Activated CD4-positive, alpha-beta T cell treated with anti-CD3 and anti-CD28 coated beads for 36 hours (primary cell): ENCODE measurements at regions of chr2 and their contacts with region 1.

Region 1: DNA sequence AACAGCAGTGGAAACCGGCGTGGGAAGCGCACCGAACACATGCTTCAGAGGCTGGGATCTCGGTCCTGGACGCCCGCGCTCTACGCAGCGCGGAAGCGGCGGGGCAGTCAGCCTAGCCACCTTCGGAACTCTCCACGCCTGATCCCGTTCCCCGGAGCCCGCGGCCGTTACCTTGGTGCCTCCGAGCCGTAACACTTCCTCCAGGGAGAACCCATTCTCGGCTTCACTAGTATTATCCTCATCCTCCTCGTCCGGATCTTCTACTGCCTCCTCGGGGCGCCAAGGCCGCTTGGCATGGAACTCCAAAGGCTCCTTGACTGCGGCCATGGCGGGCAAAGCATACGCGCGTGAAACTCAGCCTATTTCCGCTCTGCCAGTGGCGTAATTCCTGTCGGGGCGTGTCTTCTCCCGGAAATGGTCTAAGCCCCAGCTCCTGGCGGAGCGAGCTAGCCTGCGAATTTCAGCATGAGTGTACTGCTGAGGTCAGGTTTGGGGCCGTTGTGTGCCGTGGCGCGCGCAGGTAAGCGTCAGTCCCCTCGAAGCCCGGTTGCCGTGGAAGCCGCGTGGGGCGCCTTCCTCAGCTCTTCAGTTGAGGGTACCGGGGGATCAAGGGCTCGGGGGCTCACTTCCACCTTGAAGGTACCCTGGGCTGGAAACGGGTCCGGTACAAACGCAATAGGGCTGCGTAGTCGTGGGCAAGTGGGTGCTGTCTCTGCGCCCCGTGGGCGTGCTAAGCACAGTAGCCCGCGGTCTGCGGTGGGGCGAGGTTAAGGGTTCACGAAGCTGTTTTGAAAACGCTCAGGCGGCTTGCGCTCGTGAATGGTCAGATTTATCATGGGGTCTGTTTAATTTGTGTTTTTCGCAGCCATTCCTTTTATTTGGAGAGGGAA is at the starts of genes CEBPZ and NDUFAF7:
- DNase-seq: peak; percentile 95
- ATAC-seq: peak; percentile 96
- H3K4me3 Mint-ChIP-seq: no peak within 1 kb of the TSS
- H3K27ac Mint-ChIP-seq: no peak within 1 kb of the TSS
- H3K4me1 Mint-ChIP-seq: peaks cover 39% of the 10 kb centered on the region
- H3K27me3 Mint-ChIP-seq: no peaks in the 10 kb centered on the region
- total RNA-seq, gene CEBPZ: 81.8 to 107 TPM
- total RNA-seq, gene NDUFAF7: 20.8 to 22.9 TPM

Region 2: GRCh38 chr2:36889795-36890194 is 341.7 kb before region 1 on chr2:
- CTCF ChIA-PET with region 1: no interaction called
- POLR2A ChIA-PET with region 1: no interaction called
- intact Hi-C with region 1: no loop called
- DNase-seq: peak; percentile 25
- ATAC-seq: peak; percentile 99
- H3K4me3 Mint-ChIP-seq: no peak overlapping the region
- H3K27ac Mint-ChIP-seq: peak overlapping the region; percentile 67
- H3K4me1 Mint-ChIP-seq: peaks cover 8% of the 10 kb centered on the region
- H3K27me3 Mint-ChIP-seq: no peaks in the 10 kb centered on the region

Region 3: GRCh38 chr2:36966370-36967235 is 264.9 kb before region 1 on chr2 and contains the start of gene STRN:
- CTCF ChIA-PET with region 1: no interaction called
- POLR2A ChIA-PET with region 1: no interaction called
- intact Hi-C with region 1: loop called in 1 of 2 experiments (anchors 1 kb)
- DNase-seq: peak; percentile 99
- ATAC-seq: peak; percentile 95
- H3K4me3 Mint-ChIP-seq: peak within 1 kb of the TSS; percentile 100
- H3K27ac Mint-ChIP-seq: peak within 1 kb of the TSS; percentile 97
- H3K4me1 Mint-ChIP-seq: peaks cover 41% of the 10 kb centered on the region
- H3K27me3 Mint-ChIP-seq: no peaks in the 10 kb centered on the region
- total RNA-seq, gene STRN: 27.7 to 32.0 TPM

Region 4: DNA sequence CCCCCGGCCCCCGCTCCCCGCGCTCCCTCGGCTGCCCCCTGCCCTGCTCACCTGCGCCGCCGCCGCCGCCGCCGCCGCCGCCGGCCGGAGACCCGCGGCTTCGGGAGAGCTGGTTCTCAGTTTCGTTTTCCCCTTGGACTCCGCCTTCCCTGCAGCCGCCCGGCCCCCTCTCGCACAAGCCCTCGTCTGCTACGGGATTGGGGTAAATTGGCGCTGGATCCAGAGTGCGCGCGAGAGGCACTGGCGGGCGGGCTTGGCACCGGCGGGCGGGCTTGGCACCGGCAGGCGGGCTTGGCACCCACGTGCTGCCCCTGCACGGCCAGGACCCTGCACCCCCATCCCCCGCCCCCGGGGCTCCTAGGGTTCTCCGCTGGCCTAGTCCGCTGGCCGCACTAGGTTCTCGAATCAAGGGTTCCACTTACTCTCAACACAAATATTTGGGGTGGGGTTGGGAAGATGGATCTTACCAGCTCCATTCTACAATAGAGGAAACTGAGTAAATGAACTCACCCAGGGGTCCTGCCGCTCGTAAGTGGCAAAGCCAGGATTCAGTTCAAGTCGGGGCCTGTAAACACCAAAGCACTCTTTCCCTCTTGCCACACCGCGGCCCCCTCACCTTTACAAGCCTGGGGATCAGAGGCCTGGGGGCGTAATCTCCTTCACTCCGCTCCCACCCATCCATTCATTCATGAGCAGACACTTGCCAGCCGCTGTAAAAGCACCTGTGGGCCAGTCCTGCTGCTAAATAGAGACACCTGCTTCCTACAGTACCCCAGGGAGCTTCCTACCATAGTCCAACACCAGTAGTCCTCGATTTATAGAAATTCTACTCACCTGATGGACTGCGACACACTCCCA is 74.4 kb before region 1 on chr2 and contains the start of gene EIF2AK2:
- CTCF ChIA-PET with region 1: no interaction called
- POLR2A ChIA-PET with region 1: interaction called, 5 read pairs
- intact Hi-C with region 1: loop called in 1 of 2 experiments (anchors 1 kb)
- DNase-seq: peak; percentile 89
- ATAC-seq: peak; percentile 93
- H3K4me3 Mint-ChIP-seq: peak within 1 kb of the TSS; percentile 85
- H3K27ac Mint-ChIP-seq: peak within 1 kb of the TSS; percentile 89
- H3K4me1 Mint-ChIP-seq: peaks cover 40% of the 10 kb centered on the region
- H3K27me3 Mint-ChIP-seq: no peaks in the 10 kb centered on the region
- total RNA-seq, gene EIF2AK2: 66.4 to 70.6 TPM

Region 5: DNA sequence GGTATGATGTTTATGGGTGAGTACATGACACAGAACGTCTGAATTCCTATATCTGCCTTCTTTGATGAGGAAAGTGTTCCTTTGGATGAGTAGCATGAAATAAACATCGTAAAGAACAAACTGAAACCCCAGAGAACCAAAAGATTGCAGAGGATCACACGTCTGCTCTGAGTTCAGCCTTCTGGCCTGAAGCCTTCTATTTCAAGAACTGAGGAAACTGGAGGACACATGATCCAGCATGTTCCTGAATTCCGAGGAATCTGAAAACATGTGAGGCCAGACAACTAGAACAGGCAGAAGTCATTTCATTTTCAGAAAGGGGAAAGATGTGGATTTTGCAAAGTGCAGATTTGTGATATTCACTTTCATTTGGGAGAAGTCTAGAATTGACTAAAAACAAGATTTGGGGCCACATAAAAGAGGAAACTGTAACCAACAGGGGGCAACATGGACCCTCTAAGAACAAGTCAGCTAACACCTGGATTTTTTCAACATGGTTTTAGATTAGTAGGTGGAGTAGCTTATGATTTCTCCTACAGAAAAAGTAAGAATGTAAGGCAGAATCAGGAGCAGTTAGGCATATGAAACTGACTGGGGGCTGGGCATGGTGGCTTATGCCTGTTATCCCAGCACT is 51.4 kb before region 1 on chr2:
- CTCF ChIA-PET with region 1: no interaction called
- POLR2A ChIA-PET with region 1: no interaction called
- intact Hi-C with region 1: no loop called
- DNase-seq: no peak
- ATAC-seq: no peak
- H3K4me3 Mint-ChIP-seq: no peak overlapping the region
- H3K27ac Mint-ChIP-seq: no peak overlapping the region
- H3K4me1 Mint-ChIP-seq: no peaks in the 10 kb centered on the region
- H3K27me3 Mint-ChIP-seq: peaks cover 15% of the 10 kb centered on the region

Region 6: DNA sequence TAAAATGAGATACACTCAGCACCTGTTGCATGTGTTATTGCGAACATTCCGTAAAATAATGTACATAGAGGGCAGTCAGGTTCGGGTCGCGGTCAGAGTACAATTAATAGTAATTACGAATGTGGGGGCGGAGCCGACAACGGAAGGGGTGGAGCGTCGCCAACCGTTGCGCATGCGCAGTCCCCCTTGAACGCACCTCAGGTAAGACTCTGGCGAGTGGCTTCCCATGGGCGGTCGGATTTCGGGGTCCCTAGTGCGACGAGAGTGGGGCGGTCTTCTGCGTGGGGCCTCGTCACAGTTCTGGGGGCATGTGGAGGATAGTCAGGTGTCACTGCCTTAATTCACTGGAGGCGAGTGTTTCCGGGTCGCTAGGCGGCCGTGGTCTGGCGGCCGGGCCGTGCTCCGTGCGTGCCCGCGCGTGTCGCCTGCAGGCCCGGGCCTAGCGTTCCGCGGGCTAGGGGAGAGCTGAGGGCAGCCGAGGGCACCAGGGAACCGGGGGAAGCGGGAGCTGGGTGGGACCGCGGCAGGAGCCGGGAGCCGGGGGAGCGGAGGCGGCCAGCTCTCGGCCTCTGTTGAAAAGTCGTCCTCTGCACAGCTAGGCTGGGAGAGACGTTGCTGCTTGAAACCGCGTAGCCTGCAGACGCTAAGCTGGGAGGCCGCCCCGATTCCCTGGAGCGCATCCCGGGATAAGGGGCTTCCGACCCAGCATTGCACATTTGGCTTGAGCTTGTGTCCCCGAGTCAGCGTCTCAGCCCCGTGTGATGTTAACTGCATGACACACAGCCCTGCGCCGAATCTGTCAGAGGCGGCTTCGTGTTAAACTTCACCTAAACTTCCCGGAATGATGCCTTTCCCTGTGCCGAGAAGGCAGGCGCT is 34.9 kb before region 1 on chr2 and contains the start of gene CEBPZOS:
- CTCF ChIA-PET with region 1: no interaction called
- POLR2A ChIA-PET with region 1: no interaction called
- intact Hi-C with region 1: loop called (anchors 1 kb)
- DNase-seq: peak; percentile 93
- ATAC-seq: peak; percentile 84
- H3K4me3 Mint-ChIP-seq: peak within 1 kb of the TSS; percentile 86
- H3K27ac Mint-ChIP-seq: peak within 1 kb of the TSS; percentile 95
- H3K4me1 Mint-ChIP-seq: peaks cover 33% of the 10 kb centered on the region
- H3K27me3 Mint-ChIP-seq: no peaks in the 10 kb centered on the region
- total RNA-seq, gene CEBPZOS: 46.6 to 49.8 TPM

Region 7: DNA sequence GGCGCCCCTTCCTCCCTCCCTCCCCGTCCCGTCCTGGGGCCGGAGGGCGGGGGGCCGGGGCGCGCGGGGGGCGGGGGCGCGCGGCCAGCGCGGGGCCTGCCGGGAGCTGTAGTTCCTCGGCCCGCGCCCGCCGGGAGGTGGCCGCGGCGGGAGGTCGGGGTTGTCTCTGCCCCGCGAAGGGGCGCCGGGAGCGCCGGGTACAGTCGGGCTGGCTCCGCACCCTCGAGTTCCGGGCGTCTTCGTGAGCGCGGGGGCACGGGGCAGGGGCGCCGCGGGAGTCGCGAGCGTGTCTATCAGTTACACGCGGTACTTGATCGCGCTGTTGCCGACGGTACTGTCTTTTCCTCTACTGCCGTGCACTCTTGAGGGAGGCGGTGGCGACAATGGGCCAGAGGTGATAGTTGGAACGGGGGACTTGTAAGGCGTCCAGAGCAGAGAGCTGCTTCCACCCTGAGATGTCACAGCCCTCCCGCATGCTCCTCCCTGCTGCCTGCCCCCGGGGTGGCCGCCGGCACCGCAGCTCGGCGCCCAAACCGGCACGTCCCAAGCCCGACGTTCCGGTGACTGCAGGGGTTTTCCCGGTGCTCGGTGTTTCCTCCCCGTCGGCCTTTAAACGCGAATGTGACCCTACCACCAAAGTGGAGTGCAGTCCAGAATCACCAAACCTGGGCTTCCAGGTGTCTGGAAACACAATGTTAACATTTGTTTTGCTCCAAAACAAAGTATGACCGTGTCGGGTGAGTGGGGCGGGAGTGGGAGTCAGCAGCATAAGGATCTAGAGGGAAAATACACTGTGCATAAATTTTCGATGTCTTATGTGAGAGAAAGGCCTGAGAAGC is 93.5 kb after region 1 on chr2 and contains the start of gene PRKD3:
- CTCF ChIA-PET with region 1: no interaction called
- POLR2A ChIA-PET with region 1: interaction called, 5 read pairs
- intact Hi-C with region 1: loop called (anchors 1 to 5 kb)
- DNase-seq: peak; percentile 66
- ATAC-seq: peak; percentile 76
- H3K4me3 Mint-ChIP-seq: peak within 1 kb of the TSS; percentile 91
- H3K27ac Mint-ChIP-seq: peak within 1 kb of the TSS; percentile 92
- H3K4me1 Mint-ChIP-seq: peaks cover 27% of the 10 kb centered on the region
- H3K27me3 Mint-ChIP-seq: peaks cover 17% of the 10 kb centered on the region
- total RNA-seq, gene PRKD3: 17.4 to 22.8 TPM

Region 8: GRCh38 chr2:37653805-37654378 is 422.4 kb after region 1 on chr2:
- CTCF ChIA-PET with region 1: no interaction called
- POLR2A ChIA-PET with region 1: no interaction called
- intact Hi-C with region 1: no loop called
- DNase-seq: peak; percentile 58
- ATAC-seq: peak; percentile 60
- H3K4me3 Mint-ChIP-seq: peak overlapping the region; percentile 15
- H3K27ac Mint-ChIP-seq: peak overlapping the region; percentile 68
- H3K4me1 Mint-ChIP-seq: peaks cover 89% of the 10 kb centered on the region
- H3K27me3 Mint-ChIP-seq: no peaks in the 10 kb centered on the region

Region 9: GRCh38 chr2:37672104-37672869 is 440.8 kb after region 1 on chr2:
- CTCF ChIA-PET with region 1: no interaction called
- POLR2A ChIA-PET with region 1: no interaction called
- intact Hi-C with region 1: loop called in 1 of 2 experiments (anchors 5 kb)
- DNase-seq: peak; percentile 80
- ATAC-seq: peak; percentile 34
- H3K4me3 Mint-ChIP-seq: peak overlapping the region; percentile 83
- H3K27ac Mint-ChIP-seq: peak overlapping the region; percentile 83
- H3K4me1 Mint-ChIP-seq: peaks cover 40% of the 10 kb centered on the region
- H3K27me3 Mint-ChIP-seq: no peaks in the 10 kb centered on the region